Activated naive CD4-positive, alpha-beta T cell treated with anti-CD3 and anti-CD28 coated beads, Interleukin-2, amount 10 ng/mL, durations not matched to agents 7 days and 5 days (primary cell): ENCODE measurements at regions of chr19 and their contacts with region 1.

Region 1: GRCh38 chr19:5031231-5032100 is 62.6 kb downstream of the KDM4B start:
- DNase-seq: peak; percentile 85
- H3K4me3 Mint-ChIP-seq: no peak overlapping the region
- H3K27ac Mint-ChIP-seq: no peak overlapping the region
- H3K4me1 Mint-ChIP-seq: no peaks in the 10 kb centered on the region
- H3K27me3 Mint-ChIP-seq: no peaks in the 10 kb centered on the region

Region 2: GRCh38 chr19:4867534-4868285 is 163.8 kb before region 1 on chr19 and contains the start of gene PLIN3:
- CTCF ChIA-PET with region 1: interaction called, 74 read pairs
- DNase-seq: peak; percentile 95
- H3K4me3 Mint-ChIP-seq: peak within 1 kb of the TSS; percentile 74
- H3K27ac Mint-ChIP-seq: peak within 1 kb of the TSS; percentile 70
- H3K4me1 Mint-ChIP-seq: peaks cover 30% of the 10 kb centered on the region
- H3K27me3 Mint-ChIP-seq: peaks cover 25% of the 10 kb centered on the region

Region 3: GRCh38 chr19:4909897-4910593 is 121.4 kb before region 1 on chr19:
- CTCF ChIA-PET with region 1: interaction called, 14 read pairs
- DNase-seq: peak; percentile 97
- H3K4me3 Mint-ChIP-seq: peak overlapping the region; percentile 85
- H3K27ac Mint-ChIP-seq: peak overlapping the region; percentile 98
- H3K4me1 Mint-ChIP-seq: peaks cover 52% of the 10 kb centered on the region
- H3K27me3 Mint-ChIP-seq: peaks cover 5% of the 10 kb centered on the region

Region 4: GRCh38 chr19:4969772-4970531 is 61.5 kb before region 1 on chr19:
- CTCF ChIA-PET with region 1: interaction called, 13 read pairs
- DNase-seq: peak; percentile 36
- H3K4me3 Mint-ChIP-seq: peak overlapping the region; percentile 82
- H3K27ac Mint-ChIP-seq: peak overlapping the region; percentile 81
- H3K4me1 Mint-ChIP-seq: peaks cover 38% of the 10 kb centered on the region
- H3K27me3 Mint-ChIP-seq: no peaks in the 10 kb centered on the region

Region 5: DNA sequence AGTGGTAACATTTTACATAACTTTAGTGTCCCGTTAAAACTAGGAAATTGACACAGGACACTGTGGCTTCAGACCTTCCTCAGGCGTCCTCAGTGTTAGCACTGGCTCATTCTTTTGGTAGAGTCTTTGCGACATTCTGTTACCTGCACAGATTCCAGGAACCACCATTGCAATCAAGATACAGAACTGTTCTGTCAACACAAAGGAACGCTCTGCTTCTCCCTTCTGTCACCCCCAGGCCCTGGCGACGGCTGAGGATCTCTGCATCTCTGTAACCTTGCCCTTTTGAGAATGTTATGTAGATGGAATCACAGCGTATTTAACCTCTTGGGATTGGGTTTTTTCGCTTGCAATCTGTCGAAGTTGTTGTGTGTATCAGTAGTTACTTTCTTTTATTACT is 39.9 kb before region 1 on chr19:
- CTCF ChIA-PET with region 1: no interaction called
- DNase-seq: no peak
- H3K4me3 Mint-ChIP-seq: no peak overlapping the region
- H3K27ac Mint-ChIP-seq: no peak overlapping the region
- H3K4me1 Mint-ChIP-seq: no peaks in the 10 kb centered on the region
- H3K27me3 Mint-ChIP-seq: no peaks in the 10 kb centered on the region

Region 6: DNA sequence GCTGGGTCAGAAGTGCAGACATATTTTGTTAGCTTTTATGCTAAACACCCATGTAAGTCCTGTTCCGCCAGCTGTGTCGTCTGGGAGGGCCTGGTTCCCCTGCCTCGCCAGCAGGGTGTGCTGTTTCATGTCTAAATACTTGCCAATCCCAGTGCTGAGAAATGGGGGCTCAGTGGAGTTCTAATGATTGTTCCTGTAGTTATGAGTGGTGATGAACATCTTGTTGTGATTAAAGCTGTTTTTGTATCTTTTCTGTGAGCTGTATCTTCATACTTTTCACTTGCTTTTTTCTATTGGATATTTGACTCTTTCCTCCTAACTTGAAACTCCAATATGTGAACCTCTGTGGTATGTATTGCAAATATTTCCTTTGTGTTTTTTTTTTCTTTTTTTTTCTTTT is 29.9 kb before region 1 on chr19:
- CTCF ChIA-PET with region 1: interaction called, 15 read pairs
- DNase-seq: peak; percentile 45
- H3K4me3 Mint-ChIP-seq: no peak overlapping the region
- H3K27ac Mint-ChIP-seq: no peak overlapping the region
- H3K4me1 Mint-ChIP-seq: peaks cover 5% of the 10 kb centered on the region
- H3K27me3 Mint-ChIP-seq: no peaks in the 10 kb centered on the region